MCF 10A (cell line): ENCODE measurements at regions of chr12 and their contacts with region 1.

Region 1: DNA sequence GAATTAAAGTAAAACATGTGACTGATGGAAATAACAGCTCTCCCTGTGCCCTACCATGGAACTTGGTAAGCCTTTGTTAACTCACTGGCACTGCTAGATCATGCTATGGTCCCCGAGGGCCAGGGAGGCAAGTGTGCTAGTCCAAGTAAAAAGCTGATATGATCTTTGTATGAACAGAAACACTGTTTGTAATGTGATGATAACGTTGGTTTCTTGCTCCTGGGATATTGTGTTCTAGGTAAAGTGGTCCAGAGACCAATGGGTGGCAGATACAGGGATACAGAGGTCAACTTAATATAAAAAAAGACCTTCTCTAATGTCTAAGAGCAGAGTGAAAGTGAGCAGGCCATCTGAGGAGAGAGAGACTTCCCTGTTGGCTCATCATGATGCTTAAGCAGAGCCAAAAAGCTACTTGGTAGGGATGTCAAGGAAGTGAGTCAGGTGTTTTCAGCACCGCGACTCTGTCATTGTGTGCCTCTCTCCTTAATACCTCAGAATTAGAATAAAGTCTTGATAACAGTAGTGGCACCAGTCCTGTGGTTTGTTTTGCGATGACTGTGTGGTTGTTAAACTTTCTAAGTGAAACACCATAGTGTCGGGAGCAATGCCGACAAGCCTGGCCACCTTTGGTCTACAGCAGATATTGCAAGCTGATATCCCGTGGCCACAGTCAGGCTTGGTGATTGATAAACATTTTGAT is 27.7 kb downstream of the BICD1 start:
- DNase-seq: peak; percentile 36
- H3K4me3 Mint-ChIP-seq: no peak overlapping the region
- H3K27ac Mint-ChIP-seq: no peak overlapping the region
- H3K4me1 Mint-ChIP-seq: peaks cover 11% of the 10 kb centered on the region
- H3K27me3 Mint-ChIP-seq: no peaks in the 10 kb centered on the region
- CTCF ChIP-seq: no peak

Region 2: GRCh38 chr12:32115404-32116104 is 18.8 kb before region 1 on chr12:
- CTCF ChIA-PET with region 1: interaction called, 4 read pairs
- POLR2A ChIA-PET with region 1: interaction called, 11 read pairs
- intact Hi-C with region 1: no loop called
- DNase-seq: peak; percentile 99
- H3K4me3 Mint-ChIP-seq: peak overlapping the region; percentile 5
- H3K27ac Mint-ChIP-seq: peak overlapping the region; percentile 59
- H3K4me1 Mint-ChIP-seq: peaks cover 26% of the 10 kb centered on the region
- H3K27me3 Mint-ChIP-seq: no peaks in the 10 kb centered on the region
- CTCF ChIP-seq: no peak